Activated CD4-positive, alpha-beta memory T cell treated with anti-CD3 and anti-CD28 coated beads, Interleukin-2, amount 10 ng/mL, durations not matched to agents 7 days and 5 days (primary cell): ENCODE measurements at regions of chr10 and their contacts with region 1.

Region 1: DNA sequence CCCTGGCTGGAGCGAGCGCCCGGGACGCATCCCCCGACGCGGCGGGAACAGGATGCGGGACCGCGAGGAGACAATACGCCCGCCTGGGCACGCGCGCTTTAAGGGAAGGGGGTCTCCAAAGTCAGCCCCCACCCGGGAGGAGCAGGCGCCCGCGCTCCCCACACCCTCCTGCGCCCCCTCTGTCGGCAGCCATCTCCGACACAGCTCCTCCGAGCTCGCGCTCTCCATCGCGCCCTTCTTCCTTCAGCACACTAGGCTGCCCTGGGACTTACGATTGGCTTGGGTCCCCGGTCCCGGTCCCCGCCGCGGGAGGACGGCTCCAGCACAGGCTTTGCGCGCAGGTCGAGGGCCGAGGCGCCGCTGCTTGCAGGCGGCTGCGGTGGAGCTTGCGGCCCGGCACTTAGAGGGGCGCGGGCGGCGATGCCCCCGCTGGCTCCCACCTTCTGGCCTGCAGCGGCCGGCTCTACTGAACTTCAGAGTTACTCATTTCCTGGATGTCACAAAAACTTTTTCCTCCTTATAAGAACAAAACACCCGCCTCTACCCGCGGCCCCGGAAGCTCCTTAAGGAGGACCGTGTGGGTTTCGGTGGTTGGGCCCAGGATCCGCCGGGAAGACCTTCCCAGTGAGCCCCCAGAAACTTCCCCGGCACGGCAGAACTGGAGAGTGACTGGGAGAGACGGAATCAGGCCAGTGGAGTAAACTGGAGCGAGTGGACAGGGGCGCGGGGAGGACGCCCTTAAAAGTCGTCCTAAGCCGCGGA is at the start of gene ITPRIP:
- DNase-seq: peak; percentile 78
- H3K4me3 Mint-ChIP-seq: peak within 1 kb of the TSS; percentile 95
- H3K27ac Mint-ChIP-seq: peak within 1 kb of the TSS; percentile 99
- H3K4me1 Mint-ChIP-seq: peaks cover 45% of the 10 kb centered on the region
- H3K27me3 Mint-ChIP-seq: peaks cover 8% of the 10 kb centered on the region
- total RNA-seq, gene ITPRIP: 24.6 to 25.9 TPM

Region 2: DNA sequence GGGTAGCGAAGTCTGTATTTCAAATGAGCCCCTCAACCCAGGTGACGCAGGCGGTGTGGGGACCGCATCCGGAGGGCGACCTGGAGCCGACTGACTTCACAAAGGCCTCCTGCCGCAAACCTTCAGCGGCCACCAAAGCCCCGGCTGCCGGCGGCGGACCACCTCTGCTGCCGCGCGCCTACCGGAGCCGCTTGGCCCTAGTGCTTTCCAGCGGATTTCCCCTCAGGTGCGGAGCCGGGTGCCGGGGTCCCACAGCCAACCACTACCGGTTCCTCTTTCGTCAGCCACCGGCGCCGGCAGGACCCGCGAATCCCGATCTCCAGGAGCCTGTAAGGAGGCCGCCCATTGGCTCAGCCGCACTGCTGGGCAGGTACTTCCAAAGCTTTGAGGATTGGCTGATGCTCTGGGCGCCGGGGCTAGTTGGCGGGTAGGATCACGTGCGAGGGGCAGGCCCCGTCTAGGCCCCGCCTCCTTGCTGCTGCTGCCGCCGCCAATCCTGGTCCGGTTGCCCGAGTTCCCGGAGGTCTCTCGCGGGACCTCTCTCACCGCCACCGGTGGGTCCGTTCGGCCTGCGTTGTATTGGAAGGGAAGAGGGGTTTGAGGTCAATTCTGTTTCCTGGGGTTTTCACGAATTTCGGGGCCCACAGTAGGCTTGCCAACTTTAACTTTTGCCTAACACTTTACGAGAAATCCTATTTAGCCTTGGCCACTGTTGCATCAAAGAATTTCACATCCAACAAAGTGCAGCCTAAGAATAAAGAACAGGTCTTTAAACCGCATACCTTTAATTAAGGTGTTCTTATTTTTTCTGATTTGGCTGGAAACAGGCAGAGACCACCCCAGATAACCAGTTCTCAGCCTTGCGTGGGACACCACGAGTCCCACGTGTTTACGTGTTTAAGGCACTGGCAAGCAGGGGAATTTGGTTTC is 69.2 kb before region 1 on chr10 and contains the start of gene GSTO2:
- CTCF ChIA-PET with region 1: interaction called, 23 read pairs
- POLR2A ChIA-PET with region 1: interaction called, 11 read pairs
- DNase-seq: peak; percentile 99
- H3K4me3 Mint-ChIP-seq: peak within 1 kb of the TSS; percentile 84
- H3K27ac Mint-ChIP-seq: peak within 1 kb of the TSS; percentile 93
- H3K4me1 Mint-ChIP-seq: peaks cover 42% of the 10 kb centered on the region
- H3K27me3 Mint-ChIP-seq: no peaks in the 10 kb centered on the region
- total RNA-seq, gene GSTO2: 0.88 to 1.8 TPM

Region 3: GRCh38 chr10:104291439-104291951 is 46.7 kb before region 1 on chr10:
- CTCF ChIA-PET with region 1: interaction called, 31 read pairs
- POLR2A ChIA-PET with region 1: interaction called, 5 read pairs
- DNase-seq: peak; percentile 90
- H3K4me3 Mint-ChIP-seq: no peak overlapping the region
- H3K27ac Mint-ChIP-seq: no peak overlapping the region
- H3K4me1 Mint-ChIP-seq: peaks cover 12% of the 10 kb centered on the region
- H3K27me3 Mint-ChIP-seq: peaks cover 33% of the 10 kb centered on the region

Region 4: DNA sequence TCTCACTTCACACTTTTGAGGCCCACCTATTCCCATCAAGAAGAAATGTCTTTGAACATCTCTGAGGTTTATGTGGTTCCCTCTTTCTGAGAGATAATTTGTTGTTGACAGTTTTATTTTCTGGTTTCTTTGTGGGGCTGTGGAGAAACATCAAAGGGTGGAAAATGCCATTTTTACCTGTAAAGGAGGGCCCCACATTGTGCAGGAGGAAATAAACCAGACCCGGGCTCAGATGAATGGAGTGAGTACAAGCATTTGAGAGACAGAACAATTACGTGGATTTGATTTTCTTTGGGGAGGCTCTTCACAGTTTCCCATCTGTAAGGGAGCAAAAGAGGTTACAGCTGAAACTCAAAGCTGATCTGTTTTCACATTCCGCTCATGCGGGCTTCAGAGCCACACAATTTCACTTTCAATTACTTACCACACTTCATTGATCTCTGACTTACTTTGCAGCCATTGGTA is 29.7 kb before region 1 on chr10:
- CTCF ChIA-PET with region 1: interaction called, 237 read pairs
- POLR2A ChIA-PET with region 1: interaction called, 54 read pairs
- DNase-seq: no peak
- H3K4me3 Mint-ChIP-seq: no peak overlapping the region
- H3K27ac Mint-ChIP-seq: peak overlapping the region; percentile 71
- H3K4me1 Mint-ChIP-seq: peaks cover 47% of the 10 kb centered on the region
- H3K27me3 Mint-ChIP-seq: no peaks in the 10 kb centered on the region

Region 5: GRCh38 chr10:104322416-104322782 is 15.8 kb before region 1 on chr10:
- CTCF ChIA-PET with region 1: interaction called, 17 read pairs
- POLR2A ChIA-PET with region 1: interaction called, 49 read pairs
- DNase-seq: peak; percentile 76
- H3K4me3 Mint-ChIP-seq: peak overlapping the region; percentile 67
- H3K27ac Mint-ChIP-seq: peak overlapping the region; percentile 89
- H3K4me1 Mint-ChIP-seq: peaks cover 87% of the 10 kb centered on the region
- H3K27me3 Mint-ChIP-seq: no peaks in the 10 kb centered on the region